ENCODE measurements at regions of chr9 and their contacts with region 1.

Region 1: GRCh38 chr9:87684627-87685219 is 41.2 kb upstream of the CTSL start:
- DNase-seq: peak in 1 of 2 donors; percentile 77
- ATAC-seq: peak; percentile 81

Region 2: DNA sequence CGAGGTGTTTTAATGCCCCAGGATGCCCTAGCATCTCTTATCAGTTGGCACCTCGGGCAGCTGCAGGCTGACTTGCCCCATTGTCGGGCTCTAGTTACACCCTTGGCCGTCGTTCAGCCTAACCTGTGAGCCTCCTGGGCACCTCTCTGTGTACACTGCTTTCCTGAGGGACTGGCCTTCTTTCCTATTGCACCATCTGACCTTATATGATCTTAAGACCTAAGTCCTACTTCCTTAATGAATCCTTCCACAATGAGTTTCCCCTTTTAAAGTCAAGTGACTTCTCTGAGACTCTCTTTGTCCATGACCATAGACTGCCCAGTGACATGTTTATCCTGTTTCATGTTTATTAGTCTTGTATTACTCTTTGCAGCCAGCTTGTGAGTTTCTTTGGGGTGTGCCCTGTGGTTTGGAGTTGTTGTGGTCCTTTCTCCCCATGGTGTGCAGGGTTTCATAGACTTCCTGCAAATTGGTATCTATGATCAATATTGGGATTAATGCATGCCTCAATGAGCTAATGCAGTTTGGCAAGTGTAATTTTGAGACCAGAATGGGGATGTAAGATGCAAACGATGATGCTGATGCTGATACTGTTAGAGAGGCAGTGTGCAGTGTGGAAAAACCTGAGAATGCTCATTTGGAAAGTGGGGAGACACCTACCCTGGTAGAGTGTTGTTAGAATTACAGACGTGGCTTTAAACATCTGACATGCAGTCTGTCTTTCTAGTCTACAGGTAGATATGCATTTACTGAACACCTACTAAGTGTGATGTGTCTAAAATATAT is 182.1 kb before region 1 on chr9:
- intact Hi-C with region 1: no loop called
- DNase-seq: peak; percentile 38 to 48
- ATAC-seq: peak; percentile 61

Region 3: GRCh38 chr9:87812375-87813118 is 127.8 kb after region 1 on chr9:
- intact Hi-C with region 1: loop called in 1 of 2 experiments (anchors 10 kb)
- DNase-seq: no peak
- ATAC-seq: no peak

Measured in left colon (tissue), 2 donors.